T-cell (primary cell): ENCODE measurements at regions of chr3 and their contacts with region 1.

Region 1: GRCh38 chr3:172776049-172776717 is 25.7 kb downstream of the ECT2 start:
- DNase-seq: no peak
- ATAC-seq: no peak
- H3K4me3 ChIP-seq: no peak overlapping the region
- H3K4me3 Mint-ChIP-seq: no peak overlapping the region
- H3K27ac ChIP-seq: no peak overlapping the region
- H3K27ac Mint-ChIP-seq: no peak overlapping the region
- H3K4me1 ChIP-seq: no peaks in the 10 kb centered on the region
- H3K4me1 Mint-ChIP-seq: peaks cover 0 to 3% (median 2%) of the 10 kb centered on the region in 3 donors
- H3K27me3 ChIP-seq: no peaks in the 10 kb centered on the region
- H3K27me3 Mint-ChIP-seq: no peaks in the 10 kb centered on the region

Region 2: GRCh38 chr3:171005252-171006047 is 1770.7 kb before region 1 on chr3:
- CTCF ChIA-PET with region 1: no interaction called
- POLR2A ChIA-PET with region 1: interaction called in 1 of 2 experiments, 10 read pairs
- DNase-seq: no peak
- ATAC-seq: no peak
- H3K4me3 ChIP-seq: no peak overlapping the region
- H3K4me3 Mint-ChIP-seq: no peak overlapping the region
- H3K27ac ChIP-seq: no peak overlapping the region
- H3K27ac Mint-ChIP-seq: no peak overlapping the region
- H3K4me1 ChIP-seq: no peaks in the 10 kb centered on the region
- H3K4me1 Mint-ChIP-seq: no peaks in the 10 kb centered on the region
- H3K27me3 ChIP-seq: no peaks in the 10 kb centered on the region
- H3K27me3 Mint-ChIP-seq: peaks cover 0 to 7% of the 10 kb centered on the region in 2 donors

Region 3: DNA sequence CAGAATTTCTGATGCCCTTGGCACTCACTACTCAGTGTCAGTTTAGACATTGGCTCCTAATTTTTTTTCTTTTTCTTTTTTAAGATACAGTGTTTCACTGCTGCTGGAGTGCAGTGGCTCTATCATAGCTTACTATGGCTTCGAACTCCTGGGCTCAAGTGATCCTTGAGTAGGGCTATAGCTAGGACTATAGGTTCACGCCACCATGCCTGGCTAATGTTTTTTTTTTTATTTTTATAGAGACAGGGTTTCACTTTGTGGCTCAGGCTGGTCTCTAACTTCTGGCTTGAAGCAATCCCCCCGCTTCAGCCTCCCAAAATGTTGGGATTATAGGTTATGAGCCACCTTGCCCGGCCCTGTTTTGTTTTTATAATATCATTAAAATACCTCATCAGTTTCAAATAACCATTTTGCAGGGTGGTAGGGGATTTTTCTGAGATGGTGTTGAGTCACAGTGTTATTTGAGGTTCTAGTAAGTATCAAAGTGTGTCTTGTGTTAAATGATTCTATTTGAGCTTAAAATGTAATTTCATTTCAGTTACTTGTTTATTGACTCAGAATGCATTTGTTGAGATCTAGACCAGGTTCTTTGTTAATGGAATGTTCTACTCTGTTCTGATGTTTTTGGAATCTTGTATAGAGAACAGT is 729.8 kb before region 1 on chr3:
- CTCF ChIA-PET with region 1: no interaction called
- POLR2A ChIA-PET with region 1: interaction called in 1 of 2 experiments, 12 read pairs
- DNase-seq: no peak
- ATAC-seq: no peak
- H3K4me3 ChIP-seq: no peak overlapping the region
- H3K4me3 Mint-ChIP-seq: no peak overlapping the region
- H3K27ac ChIP-seq: no peak overlapping the region
- H3K27ac Mint-ChIP-seq: peak overlapping the region in 1 of 2 donors; percentile 54
- H3K4me1 ChIP-seq: peaks cover 2 to 4% of the 10 kb centered on the region in 2 experiments
- H3K4me1 Mint-ChIP-seq: peaks cover 44 to 47% (median 45%) of the 10 kb centered on the region in 3 donors
- H3K27me3 ChIP-seq: no peaks in the 10 kb centered on the region
- H3K27me3 Mint-ChIP-seq: no peaks in the 10 kb centered on the region

Region 4: DNA sequence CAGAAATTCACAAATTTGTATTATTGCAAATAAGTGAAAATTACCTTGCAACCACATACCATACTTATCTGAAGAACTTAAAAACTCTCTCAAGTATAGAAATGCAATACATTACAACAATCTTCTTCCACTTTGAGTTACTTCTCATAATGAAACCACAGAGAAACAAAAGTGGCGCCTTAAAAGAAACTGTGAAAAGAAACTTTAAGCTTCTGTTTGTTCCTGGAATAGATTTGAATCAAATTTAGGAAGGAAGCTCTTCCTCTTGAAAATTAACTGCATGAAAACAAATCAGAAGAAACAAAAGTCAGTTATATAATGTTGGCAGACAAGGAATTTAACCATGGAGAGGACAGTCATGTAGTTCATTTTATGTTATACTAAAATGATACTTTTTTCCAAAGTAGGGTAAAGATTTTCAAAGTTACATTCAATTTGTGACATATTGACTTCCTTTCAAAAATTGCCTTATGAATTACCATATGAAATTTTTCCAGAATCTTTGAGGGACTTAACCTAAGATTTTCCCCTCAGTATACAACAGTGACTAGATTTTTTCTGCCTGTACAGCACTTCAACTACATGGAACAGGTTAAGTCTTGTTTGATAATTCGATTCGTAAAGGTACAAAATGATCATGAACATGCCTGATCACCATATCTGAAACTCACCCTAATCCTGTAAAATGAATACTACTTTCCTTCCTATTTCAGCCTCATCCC is 195.3 kb before region 1 on chr3:
- CTCF ChIA-PET with region 1: no interaction called
- POLR2A ChIA-PET with region 1: no interaction called
- DNase-seq: no peak
- ATAC-seq: peak in 3 of 4 experiments; percentile 50 to 62 (median 51)
- H3K4me3 ChIP-seq: no peak overlapping the region
- H3K4me3 Mint-ChIP-seq: peak overlapping the region; percentile 43 to 66 (median 56)
- H3K27ac ChIP-seq: peak overlapping the region; percentile 64
- H3K27ac Mint-ChIP-seq: peak overlapping the region; percentile 94 to 95
- H3K4me1 ChIP-seq: peaks cover 24 to 46% of the 10 kb centered on the region in 2 experiments
- H3K4me1 Mint-ChIP-seq: peaks cover 78 to 93% (median 92%) of the 10 kb centered on the region in 3 donors
- H3K27me3 ChIP-seq: no peaks in the 10 kb centered on the region
- H3K27me3 Mint-ChIP-seq: no peaks in the 10 kb centered on the region